Upper lobe of right lung (tissue), 1 donor: ENCODE measurements at regions of chr9 and their contacts with region 1.

Region 1: DNA sequence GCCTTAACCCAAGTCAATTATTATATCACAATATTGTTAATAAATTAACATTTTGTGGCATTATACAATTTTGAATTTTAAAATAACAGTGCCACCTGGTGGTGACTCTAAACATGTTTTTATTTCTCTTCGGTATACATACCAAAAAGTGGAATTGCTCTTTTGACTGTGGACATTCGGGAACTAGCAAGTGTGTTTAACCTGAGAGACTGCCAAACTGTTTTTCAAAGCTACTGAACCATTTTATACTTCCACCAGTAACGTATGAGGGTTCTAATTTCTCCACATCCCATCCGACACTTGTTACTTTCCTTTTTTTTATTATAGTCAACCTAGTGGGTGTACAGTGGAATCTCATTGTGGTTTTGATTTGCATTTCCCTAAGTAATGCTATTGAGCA is 18.3 kb upstream of the HSDL2 start:
- DNase-seq: no peak
- ATAC-seq: peak; percentile 56
- H3K4me3 ChIP-seq: no peak overlapping the region
- H3K27ac ChIP-seq: no peak overlapping the region
- H3K4me1 ChIP-seq: no peaks in the 10 kb centered on the region
- H3K27me3 ChIP-seq: no peaks in the 10 kb centered on the region
- CTCF ChIP-seq: peak; percentile 59

Region 2: DNA sequence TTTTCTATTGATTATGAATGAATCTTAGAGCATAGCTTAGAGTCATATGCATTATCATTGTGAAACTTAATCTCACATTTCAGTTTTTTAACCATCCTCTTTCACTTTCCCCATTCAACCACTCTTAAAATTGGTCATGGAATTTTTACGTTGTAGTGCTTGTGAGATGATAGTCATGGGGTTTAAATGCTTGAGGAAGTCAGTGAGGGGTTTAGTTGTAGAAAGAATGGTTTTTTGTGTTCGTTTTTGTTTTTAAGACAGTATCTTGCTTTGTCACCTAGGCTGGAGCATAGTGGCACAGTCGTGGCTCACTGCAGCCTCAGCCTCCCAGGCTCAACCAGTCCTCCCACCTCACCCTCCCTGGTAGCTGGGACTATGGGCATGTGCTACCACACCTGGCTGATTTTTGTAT is 445.4 kb before region 1 on chr9:
- intact Hi-C with region 1: no loop called
- DNase-seq: no peak
- ATAC-seq: no peak
- H3K4me3 ChIP-seq: no peak overlapping the region
- H3K27ac ChIP-seq: no peak overlapping the region
- H3K4me1 ChIP-seq: peaks cover 33% of the 10 kb centered on the region
- H3K27me3 ChIP-seq: no peaks in the 10 kb centered on the region
- CTCF ChIP-seq: no peak

Region 3: GRCh38 chr9:112086627-112087026 is 275.0 kb before region 1 on chr9:
- intact Hi-C with region 1: loop called (anchors 5 kb)
- DNase-seq: no peak
- ATAC-seq: no peak
- H3K4me3 ChIP-seq: no peak overlapping the region
- H3K27ac ChIP-seq: no peak overlapping the region
- H3K4me1 ChIP-seq: no peaks in the 10 kb centered on the region
- H3K27me3 ChIP-seq: no peaks in the 10 kb centered on the region
- CTCF ChIP-seq: peak; percentile 53